ENCODE measurements at regions of chr2 and their contacts with region 1.

Region 1: DNA sequence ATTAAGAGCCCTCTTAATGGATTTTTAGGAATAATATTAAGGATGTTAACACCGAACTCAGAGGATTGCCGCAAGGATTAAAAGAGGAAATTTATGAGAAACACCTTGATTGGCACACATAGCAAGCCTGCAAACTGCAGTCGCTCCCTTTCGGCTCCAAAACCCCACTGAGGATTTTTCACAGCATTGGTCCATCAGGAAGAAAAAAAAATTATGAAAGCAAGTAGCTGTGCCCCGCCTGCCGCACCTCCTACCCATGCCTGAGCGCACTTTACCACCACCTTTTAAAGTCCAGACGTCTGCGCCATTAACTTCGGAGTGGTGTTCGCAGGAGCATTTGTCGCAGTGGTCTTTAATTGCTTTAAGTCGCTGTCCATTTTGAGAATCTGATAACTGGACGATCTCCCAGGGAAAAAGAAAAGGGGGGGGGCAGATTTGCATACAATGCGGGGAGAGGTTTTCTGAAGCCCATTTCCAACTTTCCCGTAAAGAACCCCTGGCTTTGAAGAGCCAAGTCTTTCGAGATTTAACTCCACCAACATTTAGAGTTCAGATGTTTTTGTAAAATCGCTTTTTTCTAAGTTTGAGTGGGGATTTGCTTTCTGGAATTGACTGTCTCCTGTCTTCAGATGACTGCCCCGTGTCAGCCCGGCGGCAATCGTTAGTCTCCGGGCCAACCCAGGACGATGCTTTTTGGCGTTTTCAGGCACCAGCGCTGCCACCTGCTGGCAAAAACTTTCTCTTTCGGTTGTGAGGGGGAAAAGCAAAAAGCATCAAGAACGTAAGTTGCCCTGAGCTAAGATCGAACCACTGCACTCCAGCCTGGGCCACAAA is 914 bp upstream of the TRABD2A start:
- DNase-seq: peak; percentile 52 to 95 (median 77)

Region 2: GRCh38 chr2:84925724-84926376 is 44.1 kb after region 1 on chr2:
- intact Hi-C with region 1: loop called (anchors 5 kb)
- DNase-seq: peak; percentile 71 to 98 (median 94)

Region 3: GRCh38 chr2:85132834-85133637 is 251.2 kb after region 1 on chr2 and contains the start of gene TCF7L1:
- intact Hi-C with region 1: no loop called
- DNase-seq: peak; percentile 34 to 91 (median 52)